Adrenal gland (tissue), 19 donors: ENCODE measurements at regions of chr3 and their contacts with region 1.

Region 1: DNA sequence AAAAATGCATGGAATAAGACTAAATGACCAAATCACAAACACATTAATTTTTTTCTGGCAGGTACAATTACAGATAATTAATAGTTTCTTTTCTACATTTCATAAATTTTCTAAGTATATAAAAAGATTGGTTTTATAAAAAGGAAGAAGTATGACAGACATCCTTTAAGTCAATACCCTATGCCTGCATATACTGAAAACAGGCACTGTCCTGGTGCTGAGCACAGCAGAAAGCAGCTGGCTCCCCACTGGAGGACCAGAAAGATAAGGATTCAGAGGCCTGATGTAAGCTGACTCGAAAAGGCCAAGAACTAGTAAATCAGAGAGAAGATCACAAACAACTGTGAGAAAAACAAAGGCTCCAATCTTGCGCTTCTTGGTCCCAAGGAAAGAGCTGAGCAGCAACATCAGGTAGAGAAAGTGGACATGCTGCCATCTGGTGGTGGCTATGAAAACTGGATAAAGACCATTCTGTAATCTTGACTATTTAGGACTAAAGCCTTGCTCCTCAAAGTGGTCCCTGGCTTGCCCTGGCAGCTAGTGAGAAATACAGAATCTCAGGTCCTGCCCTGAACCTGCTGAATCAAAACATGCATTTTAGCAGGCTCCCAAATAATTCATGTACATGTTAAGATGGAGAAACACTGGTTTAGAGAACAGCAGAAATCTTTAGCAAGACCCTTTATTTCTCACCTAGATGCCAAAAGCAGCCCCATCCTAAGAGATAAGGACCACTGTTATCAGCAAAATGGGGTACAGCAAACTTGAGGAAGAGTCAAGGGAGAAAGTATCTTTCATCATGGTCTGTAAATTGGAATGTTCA is 76.0 kb downstream of the TRANK1 start:
- DNase-seq: peak; percentile 37 to 76 (median 49)
- H3K4me3 ChIP-seq: no peak overlapping the region
- H3K27ac ChIP-seq: no peak overlapping the region
- H3K4me1 ChIP-seq: no peaks in the 10 kb centered on the region
- H3K27me3 ChIP-seq: no peaks in the 10 kb centered on the region
- CTCF ChIP-seq: peak; percentile 57 to 79 (median 69)
- POLR2A ChIP-seq: no peak

Region 2: DNA sequence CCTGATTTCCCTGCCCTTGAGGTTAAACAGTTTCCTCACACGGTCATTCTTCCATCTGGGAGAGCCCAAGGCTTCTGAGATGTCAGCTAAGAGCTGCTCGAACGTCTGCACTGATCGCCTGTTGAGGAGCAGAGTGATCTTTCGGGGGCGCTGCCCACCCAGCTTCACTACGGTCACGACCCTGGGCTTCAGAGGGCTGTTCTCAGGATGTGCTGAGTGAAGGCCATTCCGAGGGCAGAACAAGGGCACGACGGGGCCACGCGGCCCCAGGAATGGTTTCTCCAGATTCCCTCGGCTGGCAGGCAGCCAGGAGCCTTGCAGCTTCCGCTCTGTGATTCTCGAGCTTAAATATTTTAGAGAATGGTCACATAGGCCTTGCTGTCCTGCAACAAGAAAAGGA is 130.1 kb before region 1 on chr3:
- intact Hi-C with region 1: loop called (anchors 5 kb)
- DNase-seq: peak in 5 of 7 donors; percentile 34 to 60 (median 47)
- H3K4me3 ChIP-seq: no peak overlapping the region
- H3K27ac ChIP-seq: no peak overlapping the region
- H3K4me1 ChIP-seq: no peaks in the 10 kb centered on the region
- H3K27me3 ChIP-seq: no peaks in the 10 kb centered on the region
- CTCF ChIP-seq: no peak
- POLR2A ChIP-seq: no peak

Region 3: GRCh38 chr3:36751326-36751725 is 117.5 kb before region 1 on chr3:
- intact Hi-C with region 1: no loop called
- DNase-seq: no peak
- H3K4me3 ChIP-seq: no peak overlapping the region
- H3K27ac ChIP-seq: no peak overlapping the region
- H3K4me1 ChIP-seq: no peaks in the 10 kb centered on the region
- H3K27me3 ChIP-seq: no peaks in the 10 kb centered on the region
- CTCF ChIP-seq: no peak
- POLR2A ChIP-seq: no peak

Region 4: GRCh38 chr3:37041546-37042195 is 172.8 kb after region 1 on chr3:
- intact Hi-C with region 1: no loop called
- DNase-seq: no peak
- H3K4me3 ChIP-seq: no peak overlapping the region
- H3K27ac ChIP-seq: no peak overlapping the region
- H3K4me1 ChIP-seq: no peaks in the 10 kb centered on the region
- H3K27me3 ChIP-seq: no peaks in the 10 kb centered on the region
- CTCF ChIP-seq: no peak
- POLR2A ChIP-seq: no peak